Pancreas (tissue), 10 donors: ENCODE measurements at regions of chr7 and their contacts with region 1.

Region 1: GRCh38 chr7:35624299-35625186 is 70.4 kb downstream of the HERPUD2 start:
- DNase-seq: peak in 1 of 6 donors; percentile 48
- ATAC-seq: peak; percentile 76 to 98 (median 92)
- H3K4me3 ChIP-seq: no peak overlapping the region
- H3K27ac ChIP-seq: no peak overlapping the region
- H3K4me1 ChIP-seq: peaks cover 0 to 5% (median 0%) of the 10 kb centered on the region in 3 donors
- H3K27me3 ChIP-seq: no peaks in the 10 kb centered on the region
- CTCF ChIP-seq: peak; percentile 63 to 80 (median 65)

Region 2: GRCh38 chr7:35424869-35425495 is 199.6 kb before region 1 on chr7:
- intact Hi-C with region 1: loop called in 1 of 3 experiments (anchors 5 kb)
- DNase-seq: peak; percentile 32 to 74 (median 64)
- ATAC-seq: peak; percentile 50 to 94 (median 91)
- H3K4me3 ChIP-seq: no peak overlapping the region
- H3K27ac ChIP-seq: no peak overlapping the region
- H3K4me1 ChIP-seq: no peaks in the 10 kb centered on the region
- H3K27me3 ChIP-seq: peaks cover 0 to 5% (median 0%) of the 10 kb centered on the region in 4 donors
- CTCF ChIP-seq: peak; percentile 52 to 76 (median 68)